Panc1 (cell line): ENCODE measurements at regions of chr15 and their contacts with region 1.

Region 1: GRCh38 chr15:64909546-64909945 is 2.2 kb upstream of the ANKDD1A start:
- DNase-seq: no peak
- ATAC-seq: no peak
- H3K4me3 ChIP-seq: no peak overlapping the region
- H3K27ac ChIP-seq: no peak overlapping the region
- H3K4me1 ChIP-seq: peaks cover 6% of the 10 kb centered on the region
- H3K27me3 ChIP-seq: 0 out of 2 replicates have a peak, but pooled peaks cover 2% of the 10 kb centered on the region
- CTCF ChIP-seq: no peak

Region 2: GRCh38 chr15:64693134-64693533 is 216.4 kb before region 1 on chr15:
- CTCF ChIA-PET with region 1: no interaction called
- POLR2A ChIA-PET with region 1: no interaction called
- in situ Hi-C with region 1: no loop called
- intact Hi-C with region 1: no loop called
- DNase-seq: no peak
- ATAC-seq: no peak
- H3K4me3 ChIP-seq: no peak overlapping the region
- H3K27ac ChIP-seq: no peak overlapping the region
- H3K4me1 ChIP-seq: peaks cover 15% of the 10 kb centered on the region
- H3K27me3 ChIP-seq: no peaks in the 10 kb centered on the region
- CTCF ChIP-seq: no peak

Region 3: DNA sequence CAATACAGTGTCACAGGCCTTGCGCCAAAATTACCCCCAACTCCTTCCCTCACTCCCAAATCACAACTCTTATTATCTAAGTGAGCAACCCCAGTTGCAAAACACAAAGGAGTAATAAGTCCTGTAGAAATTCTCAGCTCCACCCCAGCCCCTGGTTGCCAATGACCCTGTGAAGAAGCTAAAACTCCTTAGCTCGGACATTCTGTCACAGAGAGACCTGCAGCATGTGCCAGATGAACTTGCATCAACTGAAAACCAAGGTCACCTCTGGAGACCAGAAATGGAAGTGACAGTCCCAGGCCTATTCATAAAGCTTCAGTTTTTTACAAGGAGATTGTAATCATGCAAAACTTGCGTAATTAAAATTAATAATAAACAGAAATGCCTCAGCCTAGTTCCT is 189.4 kb before region 1 on chr15:
- CTCF ChIA-PET with region 1: no interaction called
- POLR2A ChIA-PET with region 1: interaction called, 11 read pairs
- in situ Hi-C with region 1: no loop called
- intact Hi-C with region 1: no loop called
- DNase-seq: no peak
- ATAC-seq: no peak
- H3K4me3 ChIP-seq: no peak overlapping the region
- H3K27ac ChIP-seq: no peak overlapping the region
- H3K4me1 ChIP-seq: no peaks in the 10 kb centered on the region
- H3K27me3 ChIP-seq: no peaks in the 10 kb centered on the region
- CTCF ChIP-seq: no peak

Region 4: GRCh38 chr15:64875641-64876223 is 33.8 kb before region 1 on chr15:
- CTCF ChIA-PET with region 1: no interaction called
- POLR2A ChIA-PET with region 1: no interaction called
- in situ Hi-C with region 1: no loop called
- intact Hi-C with region 1: no loop called
- DNase-seq: no peak
- ATAC-seq: no peak; the same call in 1 of the 2 replicates
- H3K4me3 ChIP-seq: no peak overlapping the region
- H3K27ac ChIP-seq: no peak overlapping the region
- H3K4me1 ChIP-seq: no peaks in the 10 kb centered on the region
- H3K27me3 ChIP-seq: no peaks in the 10 kb centered on the region
- CTCF ChIP-seq: no peak

Region 5: GRCh38 chr15:64975390-64975789 is 65.8 kb after region 1 on chr15:
- CTCF ChIA-PET with region 1: no interaction called
- POLR2A ChIA-PET with region 1: no interaction called
- in situ Hi-C with region 1: no loop called
- intact Hi-C with region 1: no loop called
- DNase-seq: no peak
- ATAC-seq: no peak
- H3K4me3 ChIP-seq: no peak overlapping the region
- H3K27ac ChIP-seq: no peak overlapping the region
- H3K4me1 ChIP-seq: no peaks in the 10 kb centered on the region
- H3K27me3 ChIP-seq: no peaks in the 10 kb centered on the region
- CTCF ChIP-seq: no peak